Ascending aorta (tissue), 2 donors: ENCODE measurements at regions of chr10 and their contacts with region 1.

Region 1: GRCh38 chr10:123897146-123897545 is 5.5 kb upstream of the CPXM2 start:
- DNase-seq: no peak
- H3K4me3 ChIP-seq: no peak overlapping the region
- H3K27ac ChIP-seq: no peak overlapping the region
- H3K4me1 ChIP-seq: peaks cover 0 to under 1% of the 10 kb centered on the region in 2 donors
- H3K27me3 ChIP-seq: no peaks in the 10 kb centered on the region
- CTCF ChIP-seq: peak in 1 of 3 experiments; percentile 30

Region 2: GRCh38 chr10:123759501-123760031 is 137.6 kb before region 1 on chr10:
- intact Hi-C with region 1: loop called (anchors 10 kb)
- DNase-seq: no peak
- H3K4me3 ChIP-seq: no peak overlapping the region
- H3K27ac ChIP-seq: no peak overlapping the region
- H3K4me1 ChIP-seq: no peaks in the 10 kb centered on the region
- H3K27me3 ChIP-seq: no peaks in the 10 kb centered on the region
- CTCF ChIP-seq: no peak

Region 3: DNA sequence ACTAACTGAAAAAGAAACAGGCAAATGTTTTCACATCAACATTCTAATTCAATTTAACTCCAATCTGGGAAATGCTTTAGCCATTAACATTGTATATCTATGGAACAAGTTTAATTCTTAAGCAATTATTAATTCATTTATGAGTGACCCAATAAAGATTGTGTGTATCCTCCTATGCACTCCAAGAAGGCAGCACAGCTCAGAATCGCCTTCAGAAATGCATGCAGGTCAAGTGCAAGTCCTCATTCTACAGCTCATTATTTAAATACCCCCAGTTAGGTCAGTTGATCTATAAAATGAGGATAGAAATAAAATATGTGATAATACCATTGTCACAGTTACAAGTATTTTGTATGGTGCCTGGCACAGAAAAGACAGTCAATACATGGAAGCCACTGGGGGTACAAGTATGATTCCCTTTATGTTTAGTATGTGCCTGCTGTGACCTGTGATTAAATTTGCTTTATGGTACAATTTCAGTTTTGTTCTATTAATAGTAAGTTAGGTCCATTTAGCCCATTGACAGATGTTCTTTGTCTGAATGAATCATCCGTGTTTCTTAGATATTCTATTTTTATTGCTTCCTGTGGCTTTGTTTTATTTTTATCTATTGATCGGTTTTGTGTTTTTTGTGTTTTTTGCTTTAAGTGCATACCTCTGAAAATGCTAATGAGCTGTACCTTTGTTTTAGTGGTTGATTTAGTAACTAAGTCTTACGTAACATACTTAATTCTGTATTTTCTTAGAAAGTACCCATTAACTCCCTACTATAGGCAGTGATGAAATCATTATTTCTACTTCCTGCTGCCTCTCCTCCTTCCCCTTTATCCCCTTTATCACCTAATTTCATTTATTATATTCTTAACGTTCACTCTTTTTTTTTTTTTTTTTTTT is 48.3 kb before region 1 on chr10:
- intact Hi-C with region 1: loop called (anchors 10 kb)
- DNase-seq: no peak
- H3K4me3 ChIP-seq: no peak overlapping the region
- H3K27ac ChIP-seq: peak overlapping the region in 1 of 2 donors; percentile 27
- H3K4me1 ChIP-seq: peaks cover 4 to 35% of the 10 kb centered on the region in 2 donors
- H3K27me3 ChIP-seq: no peaks in the 10 kb centered on the region
- CTCF ChIP-seq: no peak

Region 4: DNA sequence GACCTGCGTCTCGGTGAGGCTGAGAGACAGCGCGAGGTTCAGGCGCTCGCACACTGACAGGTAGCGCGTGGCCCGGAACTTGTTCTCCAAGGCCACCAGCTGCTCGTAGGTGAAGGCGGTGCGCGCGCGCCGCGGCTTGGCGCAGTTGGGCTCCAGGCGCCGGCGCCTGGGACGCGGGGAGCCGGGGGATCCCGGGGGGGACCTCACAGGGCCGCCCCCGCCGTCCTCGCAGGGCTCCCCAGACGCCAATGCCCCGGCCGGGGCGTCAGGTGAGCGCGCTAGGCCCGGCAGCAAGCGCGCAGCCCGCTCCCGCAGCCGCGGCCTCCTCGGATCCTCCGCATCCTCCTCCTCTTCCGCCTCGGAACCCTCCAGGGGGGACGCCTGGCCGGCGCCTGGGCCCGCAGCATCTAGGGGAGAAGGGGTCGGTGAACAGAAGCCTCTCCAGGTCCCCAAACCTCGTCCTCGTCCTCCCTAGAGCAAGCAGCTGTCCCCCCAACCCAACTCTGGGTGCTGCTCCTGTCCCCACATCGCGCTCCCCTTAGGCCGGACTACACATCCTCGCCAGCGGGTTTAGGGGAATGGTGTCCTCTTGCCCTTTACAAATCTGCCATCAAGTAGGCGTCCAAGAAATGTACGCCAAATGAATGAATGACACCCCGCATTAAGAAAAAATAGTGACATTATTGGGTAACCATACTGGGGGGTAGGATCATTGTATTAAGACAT is 550.8 kb after region 1 on chr10:
- intact Hi-C with region 1: no loop called
- DNase-seq: no peak
- H3K4me3 ChIP-seq: peak overlapping the region; percentile 40 to 44
- H3K27ac ChIP-seq: no peak overlapping the region
- H3K4me1 ChIP-seq: peaks cover 4 to 17% of the 10 kb centered on the region in 2 donors
- H3K27me3 ChIP-seq: peaks cover 7% of the 10 kb centered on the region
- CTCF ChIP-seq: no peak